Activated CD4-positive, alpha-beta memory T cell treated with anti-CD3 and anti-CD28 coated beads for 36 hours (primary cell): ENCODE measurements at regions of chr6 and their contacts with region 1.

Region 1: DNA sequence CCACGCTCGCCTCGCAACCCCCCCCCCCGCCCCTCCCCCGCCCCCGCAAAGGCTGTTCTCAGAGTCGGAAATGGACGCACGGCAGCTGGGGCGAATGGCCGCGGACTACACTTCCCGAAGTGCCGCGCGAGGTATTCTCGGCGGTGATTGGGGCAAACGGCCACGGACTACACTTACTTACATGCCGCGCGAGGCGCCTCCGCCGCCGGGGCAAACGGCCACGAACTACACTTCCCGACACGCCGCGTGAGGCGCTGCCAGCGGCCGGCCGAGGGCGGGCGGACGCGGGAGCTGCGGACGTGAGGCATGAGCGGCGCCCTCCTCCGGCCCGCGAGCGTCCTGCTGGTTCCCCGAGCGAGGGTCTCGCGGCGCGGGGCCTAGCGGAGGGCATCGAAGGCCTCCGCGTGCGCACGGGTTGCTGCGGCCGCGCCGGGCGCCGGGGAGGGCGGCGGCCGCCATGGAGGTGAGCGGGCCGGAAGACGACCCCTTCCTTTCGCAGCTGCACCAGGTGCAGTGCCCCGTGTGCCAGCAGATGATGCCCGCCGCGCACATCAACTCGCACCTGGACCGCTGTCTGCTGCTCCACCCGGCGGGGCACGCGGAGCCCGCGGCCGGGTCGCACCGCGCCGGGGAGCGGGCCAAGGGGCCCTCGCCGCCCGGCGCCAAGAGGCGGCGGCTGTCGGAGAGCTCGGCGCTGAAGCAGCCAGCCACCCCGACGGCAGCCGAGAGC is at the start of gene WRNIP1:
- DNase-seq: peak; percentile 98
- H3K4me3 Mint-ChIP-seq: peak within 1 kb of the TSS; percentile 92
- H3K27ac Mint-ChIP-seq: peak within 1 kb of the TSS; percentile 97
- H3K4me1 Mint-ChIP-seq: peaks cover 45% of the 10 kb centered on the region
- H3K27me3 Mint-ChIP-seq: no peaks in the 10 kb centered on the region
- total RNA-seq, gene WRNIP1: 32.7 to 32.8 TPM

Region 2: GRCh38 chr6:2245094-2245876 is 520.0 kb before region 1 on chr6 and contains the start of gene GMDS:
- CTCF ChIA-PET with region 1: no interaction called
- POLR2A ChIA-PET with region 1: no interaction called
- intact Hi-C with region 1: loop called (anchors 5 kb)
- DNase-seq: peak; percentile 86
- H3K4me3 Mint-ChIP-seq: peak within 1 kb of the TSS; percentile 91
- H3K27ac Mint-ChIP-seq: peak within 1 kb of the TSS; percentile 92
- H3K4me1 Mint-ChIP-seq: peaks cover 58% of the 10 kb centered on the region
- H3K27me3 Mint-ChIP-seq: no peaks in the 10 kb centered on the region
- total RNA-seq, gene GMDS: 34.7 to 36.4 TPM

Region 3: GRCh38 chr6:2563635-2564034 is 201.7 kb before region 1 on chr6:
- CTCF ChIA-PET with region 1: no interaction called
- POLR2A ChIA-PET with region 1: no interaction called
- intact Hi-C with region 1: loop called (anchors 10 kb)
- DNase-seq: peak; percentile 48
- H3K4me3 Mint-ChIP-seq: no peak overlapping the region
- H3K27ac Mint-ChIP-seq: no peak overlapping the region
- H3K4me1 Mint-ChIP-seq: peaks cover 11% of the 10 kb centered on the region
- H3K27me3 Mint-ChIP-seq: peaks cover 61% of the 10 kb centered on the region

Region 4: GRCh38 chr6:2641044-2641725 is 124.1 kb before region 1 on chr6:
- CTCF ChIA-PET with region 1: no interaction called
- POLR2A ChIA-PET with region 1: no interaction called
- intact Hi-C with region 1: no loop called
- DNase-seq: no peak
- H3K4me3 Mint-ChIP-seq: no peak overlapping the region
- H3K27ac Mint-ChIP-seq: no peak overlapping the region
- H3K4me1 Mint-ChIP-seq: no peaks in the 10 kb centered on the region
- H3K27me3 Mint-ChIP-seq: peaks cover 52% of the 10 kb centered on the region

Region 5: DNA sequence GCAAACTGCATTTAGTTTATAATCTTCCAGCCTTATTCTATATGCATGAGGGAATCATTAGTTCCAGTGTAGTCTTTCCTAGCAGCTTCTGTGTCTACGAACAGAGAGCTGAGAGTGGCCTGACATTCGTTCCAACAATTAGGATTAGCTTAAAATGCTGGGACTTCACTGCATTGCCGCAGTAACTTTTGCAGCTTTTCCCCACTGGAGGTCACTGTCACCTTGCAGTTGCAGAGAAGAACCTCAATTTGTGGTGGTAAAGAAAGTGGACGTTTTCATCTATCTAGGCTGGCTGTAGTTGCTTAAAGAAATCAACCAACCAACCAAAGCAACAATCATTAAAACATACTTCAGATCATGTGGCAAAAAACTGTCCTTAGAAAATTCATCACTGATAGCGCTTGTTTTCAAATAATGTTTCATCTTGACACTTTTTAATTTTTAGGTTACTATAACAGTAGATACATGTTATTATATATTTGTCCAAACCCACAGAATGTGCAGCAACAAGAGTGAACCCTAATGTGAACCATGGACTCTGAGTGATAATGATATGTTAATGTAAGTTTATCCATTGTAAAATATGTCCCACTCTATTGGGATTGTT is 26.9 kb before region 1 on chr6:
- CTCF ChIA-PET with region 1: interaction called, 36 read pairs
- POLR2A ChIA-PET with region 1: no interaction called
- intact Hi-C with region 1: loop called (anchors 1 kb)
- DNase-seq: peak; percentile 66
- H3K4me3 Mint-ChIP-seq: no peak overlapping the region
- H3K27ac Mint-ChIP-seq: no peak overlapping the region
- H3K4me1 Mint-ChIP-seq: peaks cover 9% of the 10 kb centered on the region
- H3K27me3 Mint-ChIP-seq: peaks cover 3% of the 10 kb centered on the region

Region 6: GRCh38 chr6:2749969-2750600 is 15.2 kb before region 1 on chr6:
- CTCF ChIA-PET with region 1: interaction called, 111 read pairs
- POLR2A ChIA-PET with region 1: no interaction called
- intact Hi-C with region 1: no loop called
- DNase-seq: peak; percentile 80
- H3K4me3 Mint-ChIP-seq: no peak overlapping the region
- H3K27ac Mint-ChIP-seq: no peak overlapping the region
- H3K4me1 Mint-ChIP-seq: peaks cover 2% of the 10 kb centered on the region
- H3K27me3 Mint-ChIP-seq: peaks cover 12% of the 10 kb centered on the region

Region 7: GRCh38 chr6:2900821-2901644 is 135.7 kb after region 1 on chr6:
- CTCF ChIA-PET with region 1: interaction called, 4 read pairs
- POLR2A ChIA-PET with region 1: no interaction called
- intact Hi-C with region 1: loop called (anchors 5 kb)
- DNase-seq: no peak
- H3K4me3 Mint-ChIP-seq: peak overlapping the region; percentile 99
- H3K27ac Mint-ChIP-seq: peak overlapping the region; percentile 95
- H3K4me1 Mint-ChIP-seq: peaks cover 41% of the 10 kb centered on the region
- H3K27me3 Mint-ChIP-seq: no peaks in the 10 kb centered on the region

Region 8: DNA sequence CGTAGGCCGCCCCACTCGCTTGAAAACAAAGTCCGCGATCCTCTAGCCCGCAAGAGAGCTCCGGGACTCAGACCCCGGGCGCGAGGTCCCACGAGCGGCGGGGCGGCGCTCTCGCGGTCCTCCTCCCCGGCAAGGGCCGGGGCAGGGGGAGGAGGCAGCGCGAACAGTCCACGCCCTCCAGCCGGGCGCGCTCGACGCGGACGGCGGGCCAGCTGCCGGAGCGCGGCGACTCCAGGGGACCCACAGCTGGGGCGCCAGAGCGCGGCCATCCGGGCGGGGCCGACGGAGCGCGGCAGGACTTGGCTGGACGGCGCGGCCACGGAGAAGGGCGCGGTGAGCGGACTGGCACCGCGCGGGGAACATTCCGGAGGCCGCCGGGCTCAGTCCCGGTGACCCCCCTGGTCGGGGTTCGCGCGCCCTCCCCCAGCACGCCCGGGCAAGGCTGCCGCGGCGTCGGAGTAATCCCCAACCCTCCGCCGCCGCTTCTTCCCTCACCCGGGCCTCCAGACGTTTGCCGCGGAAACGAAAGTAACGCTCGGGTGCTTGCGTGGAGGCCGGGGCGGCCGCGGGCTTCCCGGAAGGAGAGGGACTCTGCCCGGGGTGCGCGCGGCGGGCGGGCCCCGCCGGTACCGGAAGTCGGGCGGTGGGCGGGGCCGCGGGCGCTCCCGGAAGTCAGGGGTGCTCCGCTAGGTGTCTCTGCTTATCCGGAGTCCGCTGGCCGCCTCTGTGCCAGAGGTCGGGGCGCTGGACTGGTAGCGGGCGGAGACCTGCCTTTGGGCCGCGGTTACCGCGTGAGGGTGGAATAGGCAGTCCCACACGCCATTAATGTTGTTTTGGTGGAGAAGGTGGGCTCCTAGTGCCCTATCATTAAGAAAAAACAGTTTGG is 303.2 kb after region 1 on chr6 and contains the start of gene RIPK1:
- CTCF ChIA-PET with region 1: no interaction called
- POLR2A ChIA-PET with region 1: interaction called, 3 read pairs
- intact Hi-C with region 1: loop called (anchors 2 kb)
- DNase-seq: peak; percentile 96
- H3K4me3 Mint-ChIP-seq: peak within 1 kb of the TSS; percentile 96
- H3K27ac Mint-ChIP-seq: peak within 1 kb of the TSS; percentile 98
- H3K4me1 Mint-ChIP-seq: peaks cover 62% of the 10 kb centered on the region
- H3K27me3 Mint-ChIP-seq: no peaks in the 10 kb centered on the region
- total RNA-seq, gene RIPK1: 18.5 to 18.6 TPM